ENCODE measurements at regions of chr19 and their contacts with region 1.

Region 1: GRCh38 chr19:35352448-35353304 is 5.0 kb downstream of the FFAR1 start:
- DNase-seq: peak; percentile 82
- CTCF ChIP-seq: peak; percentile 79

Region 2: DNA sequence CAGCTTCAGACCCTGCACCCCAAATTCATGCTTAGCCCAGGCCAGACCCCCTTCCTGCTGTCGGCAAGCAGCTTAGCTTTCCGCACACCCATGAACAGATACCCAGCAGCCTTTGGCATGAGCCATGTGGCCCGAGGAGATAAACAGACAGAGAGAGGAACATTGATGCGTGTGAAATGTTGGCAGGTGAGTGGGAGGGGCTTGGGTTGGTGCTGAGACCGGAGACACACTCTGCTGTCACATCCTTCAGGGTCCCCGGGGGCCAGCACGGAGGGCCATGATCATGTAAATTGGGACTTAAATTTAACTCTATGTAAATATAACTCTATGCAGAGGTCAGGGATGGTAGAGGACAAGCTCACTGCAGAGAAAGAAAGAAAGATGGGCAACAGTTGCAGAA is 22.2 kb before region 1 on chr19:
- CTCF ChIA-PET with region 1: interaction called, 26 read pairs
- POLR2A ChIA-PET with region 1: interaction called, 5 read pairs
- DNase-seq: peak; percentile 82
- CTCF ChIP-seq: no peak

Region 3: GRCh38 chr19:35375505-35376307 is 23.0 kb after region 1 on chr19:
- CTCF ChIA-PET with region 1: interaction called, 27 read pairs
- POLR2A ChIA-PET with region 1: no interaction called
- DNase-seq: no peak
- CTCF ChIP-seq: no peak

Region 4: DNA sequence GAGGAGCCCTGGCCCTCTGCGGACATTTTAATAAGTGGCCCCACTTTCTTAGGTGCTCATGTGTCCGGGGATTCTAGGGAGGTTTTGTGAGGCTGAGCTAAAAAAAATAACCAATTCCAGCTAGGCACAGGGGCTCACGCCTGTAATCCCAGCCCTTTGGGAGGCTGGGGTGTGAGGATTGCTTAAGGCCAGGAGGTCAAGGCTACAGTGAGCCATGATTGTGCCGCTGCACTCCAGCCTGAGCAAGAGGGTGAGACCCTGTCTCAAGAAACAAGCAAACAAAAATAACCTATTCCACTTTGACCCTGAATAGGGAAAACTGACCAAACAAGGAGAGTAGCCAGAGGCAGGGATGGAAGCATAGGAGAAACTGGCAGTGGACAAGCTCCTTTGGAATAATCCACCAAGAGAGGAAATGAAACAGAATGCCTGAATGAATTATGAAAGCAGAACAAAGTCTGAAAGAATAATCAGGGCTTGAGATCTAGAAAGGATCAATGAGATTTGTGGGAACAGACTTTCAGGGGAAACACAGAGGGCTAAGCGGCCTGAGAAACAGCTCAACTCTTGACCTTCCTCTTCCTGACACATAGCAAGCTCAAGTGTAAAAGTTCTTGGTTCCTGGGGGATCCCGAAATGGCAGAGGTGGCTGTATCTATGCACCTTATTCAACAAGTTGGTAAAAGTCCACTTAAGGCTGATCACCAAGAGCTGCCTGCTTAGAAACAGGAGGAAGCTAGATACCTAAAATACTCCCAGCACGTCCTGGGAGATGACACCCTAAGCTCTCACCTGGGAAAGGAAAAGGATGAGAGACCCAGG is 65.2 kb after region 1 on chr19:
- CTCF ChIA-PET with region 1: interaction called, 15 read pairs
- POLR2A ChIA-PET with region 1: no interaction called
- DNase-seq: peak; percentile 67
- CTCF ChIP-seq: no peak

Region 5: DNA sequence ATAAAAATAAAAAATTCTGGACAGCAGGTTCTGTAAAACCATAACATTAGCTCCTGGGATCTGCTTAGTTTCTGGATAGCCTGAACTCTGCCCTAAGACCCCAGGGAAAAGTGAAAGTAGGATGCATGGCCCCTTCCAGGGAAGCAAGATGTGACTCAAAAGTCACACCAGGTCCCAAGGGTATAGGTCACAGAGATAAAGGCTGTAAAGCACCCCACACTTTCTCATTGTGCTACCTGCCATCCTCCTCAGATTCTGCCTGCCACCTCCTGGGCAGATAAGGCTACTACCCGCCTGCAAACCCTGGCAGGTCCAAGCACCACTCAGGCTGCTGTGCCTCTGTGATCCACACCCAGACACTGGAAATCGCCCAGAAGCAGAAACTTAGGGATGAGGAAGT is 116.0 kb after region 1 on chr19:
- CTCF ChIA-PET with region 1: interaction called, 125 read pairs
- POLR2A ChIA-PET with region 1: interaction called, 3 read pairs
- DNase-seq: peak; percentile 84
- CTCF ChIP-seq: peak; percentile 78

Region 6: GRCh38 chr19:35509861-35510625 is 157.4 kb after region 1 on chr19:
- CTCF ChIA-PET with region 1: interaction called, 20 read pairs
- POLR2A ChIA-PET with region 1: interaction called, 4 read pairs
- DNase-seq: peak; percentile 93
- CTCF ChIP-seq: peak; percentile 94

Region 7: GRCh38 chr19:35716801-35717666 is 364.4 kb after region 1 on chr19:
- CTCF ChIA-PET with region 1: no interaction called
- POLR2A ChIA-PET with region 1: no interaction called
- DNase-seq: peak; percentile 78
- CTCF ChIP-seq: peak; percentile 78

Region 8: DNA sequence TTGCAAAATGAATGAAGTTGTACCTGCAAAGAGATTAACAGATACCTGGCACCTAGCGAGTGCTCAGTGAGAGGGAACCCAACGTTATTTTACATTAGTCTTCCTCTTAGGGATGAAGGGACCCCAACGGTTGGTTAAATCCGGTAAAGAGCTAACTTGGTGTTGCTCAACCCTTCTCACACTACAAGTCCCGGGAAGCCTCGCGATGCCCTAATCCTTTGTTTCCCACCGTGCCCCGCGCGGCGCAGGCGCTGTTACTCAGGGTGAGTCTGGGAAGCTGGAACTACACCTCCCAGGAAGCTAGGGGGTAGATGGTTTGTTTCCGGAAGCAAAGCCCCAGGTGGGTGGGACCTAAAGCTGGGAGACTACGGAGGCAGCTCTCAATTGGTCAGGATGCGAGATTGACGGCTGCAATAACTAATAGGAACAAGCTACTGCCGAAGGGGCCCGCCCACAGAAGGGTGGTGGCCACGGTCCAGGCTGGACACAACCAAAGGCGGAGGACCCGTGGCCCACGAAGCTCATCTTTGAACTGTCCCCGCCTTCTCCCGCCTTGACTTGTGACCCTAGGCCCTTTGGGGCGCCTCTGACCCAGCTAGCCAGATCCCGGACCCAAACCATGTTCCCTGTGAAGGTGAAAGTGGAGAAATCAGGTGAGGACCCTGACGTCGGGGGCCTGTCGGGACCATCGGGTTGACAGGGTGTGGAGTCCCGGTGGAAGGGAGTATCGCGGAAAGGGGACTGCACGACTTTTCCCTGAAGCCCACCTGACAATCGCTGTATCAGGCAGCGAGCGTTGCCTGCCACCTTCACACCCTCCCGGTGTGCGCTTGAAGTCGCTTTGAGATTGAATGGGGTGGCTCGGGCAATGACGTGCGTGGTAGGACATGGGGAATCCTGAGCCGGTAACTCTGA is 395.7 kb after region 1 on chr19 and contains the start of gene LIN37:
- CTCF ChIA-PET with region 1: no interaction called
- POLR2A ChIA-PET with region 1: no interaction called
- DNase-seq: peak; percentile 93
- CTCF ChIP-seq: no peak

Measured in GM10248 (cell line).